ENCODE measurements at regions of chr4 and their contacts with region 1.

Region 1: DNA sequence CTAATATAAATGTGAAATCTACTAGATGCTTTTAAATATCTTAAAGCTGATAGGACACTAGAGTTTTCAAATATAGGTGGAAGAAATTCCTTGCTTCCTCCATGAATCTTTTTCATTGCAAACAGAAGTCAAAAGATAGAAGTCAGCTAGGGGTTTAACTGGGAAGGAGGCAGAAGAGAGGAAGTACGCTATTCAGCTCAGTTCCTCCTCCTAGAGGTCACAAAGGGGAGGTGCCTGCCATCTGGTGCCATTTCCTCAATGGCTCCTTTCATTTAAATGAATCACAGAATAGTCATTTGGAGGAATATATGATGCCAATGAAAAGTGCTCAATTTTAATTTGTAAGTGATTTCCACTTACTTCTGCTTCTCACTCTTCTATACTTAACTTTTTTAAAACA is 8.5 kb downstream of the COL25A1 start:
- DNase-seq: peak; percentile 42 to 71 (median 50)
- ATAC-seq: peak; percentile 90
- H3K4me3 ChIP-seq: no peak overlapping the region
- H3K27ac ChIP-seq: no peak overlapping the region
- H3K4me1 ChIP-seq: peaks cover 0 to 6% of the 10 kb centered on the region in 2 experiments; a peak in 3 of 5 replicates
- H3K27me3 ChIP-seq: no peaks in the 10 kb centered on the region
- CTCF ChIP-seq: peak; percentile 74 to 89 (median 78)
- EP300 ChIP-seq: no peak
- POLR2A ChIP-seq: no peak
- RAD21 ChIP-seq: peak; percentile 69 to 84

Region 2: DNA sequence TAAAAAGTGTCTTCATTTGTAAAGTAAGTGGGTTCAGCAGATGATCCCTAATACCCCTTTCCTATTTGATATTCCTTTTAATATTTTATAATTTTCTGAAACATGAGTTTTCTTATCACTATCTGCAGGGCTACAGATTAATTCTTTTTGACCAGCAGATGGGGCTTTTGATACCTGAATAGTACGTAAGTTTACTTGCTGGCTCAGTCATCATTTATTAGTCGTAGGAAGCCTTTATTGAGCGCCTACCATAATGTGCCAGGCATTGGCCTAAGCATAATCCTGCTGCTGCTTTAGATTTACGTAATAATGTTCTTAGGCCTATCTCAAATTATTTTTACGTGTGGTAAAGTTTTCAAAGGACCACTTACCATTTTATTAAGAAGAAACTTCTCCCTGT is 610.5 kb before region 1 on chr4:
- CTCF ChIA-PET with region 1: no interaction called
- POLR2A ChIA-PET with region 1: no interaction called
- in situ Hi-C with region 1: no loop called
- intact Hi-C with region 1: loop called (anchors 10 kb)
- DNase-seq: peak in 1 of 4 experiments; percentile 30
- ATAC-seq: peak; percentile 63
- H3K4me3 ChIP-seq: no peak overlapping the region
- H3K27ac ChIP-seq: no peak overlapping the region
- H3K4me1 ChIP-seq: no peaks in the 10 kb centered on the region
- H3K27me3 ChIP-seq: no peaks in the 10 kb centered on the region
- CTCF ChIP-seq: peak in 1 of 3 experiments; percentile 56; a peak in 3 of 6 replicates
- EP300 ChIP-seq: no peak
- POLR2A ChIP-seq: no peak
- RAD21 ChIP-seq: peak; percentile 54 to 60

Region 3: GRCh38 chr4:108889696-108890483 is 404.1 kb before region 1 on chr4:
- CTCF ChIA-PET with region 1: no interaction called
- POLR2A ChIA-PET with region 1: interaction called, 3 read pairs
- in situ Hi-C with region 1: no loop called
- intact Hi-C with region 1: loop called (anchors 5 kb)
- DNase-seq: no peak
- ATAC-seq: no peak
- H3K4me3 ChIP-seq: no peak overlapping the region
- H3K27ac ChIP-seq: no peak overlapping the region
- H3K4me1 ChIP-seq: peaks cover 0 to 5% of the 10 kb centered on the region in 2 experiments; a peak in 2 of 5 replicates
- H3K27me3 ChIP-seq: no peaks in the 10 kb centered on the region
- CTCF ChIP-seq: no peak
- EP300 ChIP-seq: no peak
- POLR2A ChIP-seq: no peak
- RAD21 ChIP-seq: no peak

Region 4: GRCh38 chr4:109009909-109010308 is 284.1 kb before region 1 on chr4:
- CTCF ChIA-PET with region 1: no interaction called
- POLR2A ChIA-PET with region 1: no interaction called
- in situ Hi-C with region 1: no loop called
- intact Hi-C with region 1: loop called (anchors 10 kb)
- DNase-seq: no peak
- ATAC-seq: no peak
- H3K4me3 ChIP-seq: no peak overlapping the region
- H3K27ac ChIP-seq: no peak overlapping the region
- H3K4me1 ChIP-seq: no peaks in the 10 kb centered on the region; a peak in 2 of 5 replicates
- H3K27me3 ChIP-seq: no peaks in the 10 kb centered on the region
- CTCF ChIP-seq: no peak
- EP300 ChIP-seq: no peak
- POLR2A ChIP-seq: no peak
- RAD21 ChIP-seq: no peak

Region 5: DNA sequence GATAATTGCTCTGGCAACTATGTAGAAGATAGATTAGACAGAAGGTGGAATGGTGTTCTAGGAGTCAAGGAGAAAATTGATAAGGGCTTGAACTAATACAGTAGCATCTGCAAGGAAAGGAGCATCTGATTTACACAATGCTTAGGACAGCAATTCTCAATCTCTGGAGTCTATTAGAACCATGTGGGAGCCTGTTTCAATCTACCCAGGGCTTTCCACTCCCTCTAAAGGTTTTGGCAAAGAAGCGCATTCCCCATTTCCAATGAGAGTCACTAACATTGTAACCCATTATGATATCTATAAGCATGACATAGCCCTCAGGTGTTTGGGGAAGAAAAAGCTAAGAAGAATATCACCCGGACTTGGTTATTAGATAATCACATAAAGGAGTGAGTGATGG is 159.7 kb before region 1 on chr4:
- CTCF ChIA-PET with region 1: no interaction called
- POLR2A ChIA-PET with region 1: no interaction called
- in situ Hi-C with region 1: no loop called
- intact Hi-C with region 1: loop called (anchors 5 kb)
- DNase-seq: no peak
- ATAC-seq: peak; percentile 59
- H3K4me3 ChIP-seq: no peak overlapping the region
- H3K27ac ChIP-seq: peak overlapping the region; percentile 51; the same call in 1 of the 3 replicates
- H3K4me1 ChIP-seq: peaks cover 8 to 26% of the 10 kb centered on the region in 2 experiments; a peak in 4 of 5 replicates
- H3K27me3 ChIP-seq: no peaks in the 10 kb centered on the region
- CTCF ChIP-seq: no peak
- EP300 ChIP-seq: no peak
- POLR2A ChIP-seq: no peak
- RAD21 ChIP-seq: no peak; a peak in 1 of 4 replicates

Region 6: DNA sequence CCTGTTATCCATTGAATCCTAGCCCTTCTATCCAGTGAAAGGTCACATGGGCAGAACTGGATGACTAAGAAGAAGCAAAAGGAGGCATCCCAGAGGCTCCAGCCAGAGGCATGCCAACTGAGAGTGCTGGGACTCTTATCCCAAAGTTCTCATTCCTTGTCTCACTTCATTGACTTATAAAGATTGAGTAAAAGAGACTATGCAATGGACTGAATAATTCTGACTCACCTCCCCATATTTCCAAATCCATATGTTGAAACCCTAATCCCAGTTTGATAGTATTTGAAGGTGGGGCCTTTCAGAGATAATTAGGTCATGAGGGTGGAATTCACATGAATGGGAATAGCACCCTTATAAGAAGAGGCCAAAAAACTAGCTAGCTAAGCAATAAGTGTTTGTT is 122.9 kb before region 1 on chr4:
- CTCF ChIA-PET with region 1: no interaction called
- POLR2A ChIA-PET with region 1: no interaction called
- in situ Hi-C with region 1: no loop called
- intact Hi-C with region 1: loop called (anchors 5 kb)
- DNase-seq: no peak
- ATAC-seq: no peak
- H3K4me3 ChIP-seq: no peak overlapping the region
- H3K27ac ChIP-seq: no peak overlapping the region
- H3K4me1 ChIP-seq: peaks cover 5 to 28% of the 10 kb centered on the region in 2 experiments; a peak in 3 of 5 replicates
- H3K27me3 ChIP-seq: no peaks in the 10 kb centered on the region
- CTCF ChIP-seq: no peak
- EP300 ChIP-seq: no peak
- POLR2A ChIP-seq: no peak
- RAD21 ChIP-seq: no peak